Naive thymus-derived CD8-positive, alpha-beta T cell (primary cell): ENCODE measurements at regions of chr12 and their contacts with region 1.

Region 1: DNA sequence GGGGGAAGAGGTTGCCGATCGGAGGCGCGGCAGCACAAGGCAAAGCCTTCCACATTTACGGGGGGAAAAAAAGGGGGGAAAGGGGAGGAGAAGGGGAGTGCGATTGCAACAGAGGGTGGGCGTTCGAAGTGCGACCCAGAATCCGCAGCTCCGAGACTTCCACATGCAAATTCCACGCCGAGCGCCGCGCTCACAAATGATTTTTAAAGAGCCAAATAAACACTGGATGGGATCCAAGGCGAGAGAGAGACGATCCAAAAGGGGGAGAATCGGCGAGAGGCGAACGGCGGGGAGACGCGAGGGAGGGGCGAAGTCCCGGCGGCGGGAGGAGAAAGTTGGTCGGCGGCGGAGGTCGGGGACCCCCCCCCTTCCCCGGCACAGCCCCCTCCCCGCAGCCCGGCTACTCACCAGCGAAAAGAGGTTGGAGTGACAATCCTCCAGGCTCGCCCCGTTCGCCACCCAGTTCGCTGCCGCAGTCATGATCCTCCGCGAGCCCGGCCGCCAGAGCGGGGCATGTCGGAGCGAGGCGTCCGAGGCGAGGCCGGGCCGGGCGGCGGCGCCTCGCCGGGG is 756 bp downstream of the MED13L start:
- DNase-seq: peak; percentile 59 to 85 (median 69)
- ATAC-seq: peak; percentile 45 to 58
- H3K4me3 Mint-ChIP-seq: peak overlapping the region; percentile 91 to 98 (median 96)
- H3K27ac Mint-ChIP-seq: peak overlapping the region; percentile 93 to 98 (median 95)
- H3K4me1 Mint-ChIP-seq: peaks cover 15 to 48% (median 37%) of the 10 kb centered on the region in 4 donors
- H3K27me3 Mint-ChIP-seq: no peaks in the 10 kb centered on the region

Region 2: GRCh38 chr12:116263844-116264243 is 12.9 kb before region 1 on chr12:
- POLR2A ChIA-PET with region 1: interaction called, 11 read pairs
- DNase-seq: no peak
- ATAC-seq: no peak
- H3K4me3 Mint-ChIP-seq: peak overlapping the region in 2 of 10 donors; percentile 2 to 22
- H3K27ac Mint-ChIP-seq: peak overlapping the region in 4 of 10 donors; percentile 22 to 39 (median 28)
- H3K4me1 Mint-ChIP-seq: peaks cover 29 to 43% (median 36%) of the 10 kb centered on the region in 4 donors
- H3K27me3 Mint-ChIP-seq: no peaks in the 10 kb centered on the region